Heart right ventricle (tissue), 16 donors: ENCODE measurements at regions of chr20 and their contacts with region 1.

Region 1: GRCh38 chr20:61819921-61820825 is 245.5 kb downstream of the TAF4 start:
- DNase-seq: no peak
- ATAC-seq: no peak
- H3K4me3 ChIP-seq: no peak overlapping the region
- H3K27ac ChIP-seq: no peak overlapping the region
- H3K4me1 ChIP-seq: no peaks in the 10 kb centered on the region
- H3K27me3 ChIP-seq: peaks cover 0 to 25% (median 2%) of the 10 kb centered on the region in 7 donors
- CTCF ChIP-seq: no peak

Region 2: GRCh38 chr20:61560361-61560853 is 259.8 kb before region 1 on chr20:
- intact Hi-C with region 1: loop called in 1 of 10 experiments (anchors 5 kb)
- DNase-seq: no peak
- ATAC-seq: peak in 1 of 8 donors; percentile 34
- H3K4me3 ChIP-seq: no peak overlapping the region
- H3K27ac ChIP-seq: no peak overlapping the region
- H3K4me1 ChIP-seq: no peaks in the 10 kb centered on the region
- H3K27me3 ChIP-seq: peaks cover 0 to 33% (median 7%) of the 10 kb centered on the region in 7 donors
- CTCF ChIP-seq: no peak

Region 3: DNA sequence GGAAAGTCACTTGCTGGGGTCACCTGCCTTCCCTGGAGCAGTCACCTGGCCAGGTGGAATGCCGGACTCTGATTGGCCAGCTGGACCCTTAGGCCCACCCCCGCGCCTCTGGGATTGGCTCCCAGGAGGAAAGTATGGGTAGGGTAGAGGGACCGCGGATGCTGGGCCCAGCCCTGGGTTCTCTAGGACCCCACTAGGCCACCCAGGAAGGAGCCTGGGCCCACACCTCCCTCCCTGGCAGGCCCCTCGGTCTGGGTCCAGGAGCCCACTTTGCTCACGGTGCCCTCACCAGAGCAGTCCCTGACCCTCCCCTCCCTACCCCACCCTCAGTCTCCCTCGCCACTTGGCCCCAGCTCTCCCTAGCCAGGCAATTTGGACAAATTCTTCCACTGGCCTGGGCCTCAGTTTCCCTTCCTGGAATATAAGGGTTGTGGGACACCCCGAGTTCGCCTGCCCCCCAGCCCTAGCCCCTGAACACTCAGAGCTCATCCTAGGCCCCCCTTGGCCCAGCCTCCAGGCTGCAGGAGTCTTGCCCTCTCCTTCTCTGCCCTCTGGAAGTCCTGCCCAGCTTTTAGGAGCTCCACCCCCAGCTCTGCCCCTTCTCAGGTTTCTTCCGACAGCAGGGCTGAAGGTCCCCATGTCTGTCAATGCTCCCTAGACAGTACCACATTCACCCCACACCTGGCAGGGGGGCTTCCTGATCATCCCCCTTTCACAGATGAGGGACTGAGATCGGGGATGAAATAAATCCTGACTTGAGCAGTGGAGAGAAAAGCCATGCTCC is 54.1 kb before region 1 on chr20:
- intact Hi-C with region 1: loop called in 1 of 10 experiments (anchors 10 kb)
- DNase-seq: no peak
- ATAC-seq: no peak
- H3K4me3 ChIP-seq: no peak overlapping the region
- H3K27ac ChIP-seq: no peak overlapping the region
- H3K4me1 ChIP-seq: no peaks in the 10 kb centered on the region
- H3K27me3 ChIP-seq: peaks cover 0 to 65% (median 43%) of the 10 kb centered on the region in 7 donors
- CTCF ChIP-seq: no peak